Thyroid gland (tissue), 4 donors: ENCODE measurements at regions of chr2 and their contacts with region 1.

Region 1: GRCh38 chr2:177212106-177212890 is at the start of gene HNRNPA3:
- DNase-seq: peak; percentile 99
- H3K4me3 ChIP-seq: peak within 1 kb of the TSS; percentile 82 to 95 (median 82)
- H3K27ac ChIP-seq: peak within 1 kb of the TSS; percentile 99 to 100 (median 100)
- H3K4me1 ChIP-seq: peaks cover 35 to 41% of the 10 kb centered on the region in 2 donors
- H3K27me3 ChIP-seq: no peaks in the 10 kb centered on the region
- CTCF ChIP-seq: peak in 1 of 6 experiments; percentile 22
- POLR2A ChIP-seq: peak; percentile 78 to 97
- total RNA-seq, gene HNRNPA3: 80.3 to 115 (median 82.3) TPM

Region 2: DNA sequence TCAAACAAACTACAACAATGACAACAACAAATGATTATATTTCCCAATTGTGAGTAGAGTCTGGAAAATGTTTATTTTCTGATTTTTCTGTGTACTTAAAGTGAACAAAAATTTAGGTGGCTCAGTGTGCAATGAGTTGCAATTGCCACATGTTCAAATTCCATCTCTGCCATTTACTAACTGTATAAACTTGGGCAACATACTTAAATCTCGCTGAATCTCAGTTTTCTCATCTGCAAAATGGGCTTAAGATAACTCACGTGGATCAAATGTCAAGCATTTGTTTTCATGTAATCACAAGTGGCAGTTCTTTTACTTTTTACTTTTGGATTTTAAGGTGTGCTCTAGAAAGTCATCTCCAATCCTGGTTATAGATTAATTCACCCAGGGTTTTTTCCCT is 416.5 kb before region 1 on chr2:
- intact Hi-C with region 1: no loop called
- DNase-seq: no peak
- H3K4me3 ChIP-seq: no peak overlapping the region
- H3K27ac ChIP-seq: no peak overlapping the region
- H3K4me1 ChIP-seq: no peaks in the 10 kb centered on the region
- H3K27me3 ChIP-seq: no peaks in the 10 kb centered on the region
- CTCF ChIP-seq: no peak
- POLR2A ChIP-seq: no peak

Region 3: GRCh38 chr2:177029480-177029879 is 182.8 kb before region 1 on chr2:
- intact Hi-C with region 1: no loop called
- DNase-seq: no peak
- H3K4me3 ChIP-seq: no peak overlapping the region
- H3K27ac ChIP-seq: no peak overlapping the region
- H3K4me1 ChIP-seq: no peaks in the 10 kb centered on the region
- H3K27me3 ChIP-seq: no peaks in the 10 kb centered on the region
- CTCF ChIP-seq: peak in 1 of 6 experiments; percentile 7
- POLR2A ChIP-seq: no peak

Region 4: GRCh38 chr2:177164584-177165052 is 47.7 kb before region 1 on chr2:
- intact Hi-C with region 1: loop called (anchors 10 kb)
- DNase-seq: peak; percentile 78 to 84
- H3K4me3 ChIP-seq: peak overlapping the region in 1 of 3 donors; percentile 7
- H3K27ac ChIP-seq: peak overlapping the region; percentile 78 to 90 (median 80)
- H3K4me1 ChIP-seq: peaks cover 14 to 17% of the 10 kb centered on the region in 2 donors
- H3K27me3 ChIP-seq: no peaks in the 10 kb centered on the region
- CTCF ChIP-seq: peak; percentile 99 to 100 (median 100)
- POLR2A ChIP-seq: no peak

Region 5: GRCh38 chr2:177263451-177264208 is 51.3 kb after region 1 on chr2:
- intact Hi-C with region 1: loop called (anchors 5 kb)
- DNase-seq: peak; percentile 98 to 99
- H3K4me3 ChIP-seq: peak overlapping the region; percentile 93 to 100 (median 96)
- H3K27ac ChIP-seq: peak overlapping the region; percentile 100
- H3K4me1 ChIP-seq: peaks cover 45 to 48% of the 10 kb centered on the region in 2 donors
- H3K27me3 ChIP-seq: no peaks in the 10 kb centered on the region
- CTCF ChIP-seq: peak; percentile 65 to 97 (median 85)
- POLR2A ChIP-seq: peak; percentile 53 to 88